ENCODE measurements at regions of chr17 and their contacts with region 1.

Region 1: GRCh38 chr17:81553018-81553615 is 964 bp upstream of the FAAP100 start:
- DNase-seq: peak; percentile 68
- H3K4me3 Mint-ChIP-seq: peak overlapping the region; percentile 87
- H3K27ac Mint-ChIP-seq: peak overlapping the region; percentile 88
- H3K4me1 Mint-ChIP-seq: peaks cover 19% of the 10 kb centered on the region
- H3K27me3 Mint-ChIP-seq: no peaks in the 10 kb centered on the region

Region 2: GRCh38 chr17:81253358-81254131 is 299.6 kb before region 1 on chr17:
- intact Hi-C with region 1: loop called (anchors 5 kb)
- DNase-seq: peak; percentile 41
- H3K4me3 Mint-ChIP-seq: no peak overlapping the region
- H3K27ac Mint-ChIP-seq: peak overlapping the region; percentile 2
- H3K4me1 Mint-ChIP-seq: peaks cover 2% of the 10 kb centered on the region
- H3K27me3 Mint-ChIP-seq: no peaks in the 10 kb centered on the region

Region 3: DNA sequence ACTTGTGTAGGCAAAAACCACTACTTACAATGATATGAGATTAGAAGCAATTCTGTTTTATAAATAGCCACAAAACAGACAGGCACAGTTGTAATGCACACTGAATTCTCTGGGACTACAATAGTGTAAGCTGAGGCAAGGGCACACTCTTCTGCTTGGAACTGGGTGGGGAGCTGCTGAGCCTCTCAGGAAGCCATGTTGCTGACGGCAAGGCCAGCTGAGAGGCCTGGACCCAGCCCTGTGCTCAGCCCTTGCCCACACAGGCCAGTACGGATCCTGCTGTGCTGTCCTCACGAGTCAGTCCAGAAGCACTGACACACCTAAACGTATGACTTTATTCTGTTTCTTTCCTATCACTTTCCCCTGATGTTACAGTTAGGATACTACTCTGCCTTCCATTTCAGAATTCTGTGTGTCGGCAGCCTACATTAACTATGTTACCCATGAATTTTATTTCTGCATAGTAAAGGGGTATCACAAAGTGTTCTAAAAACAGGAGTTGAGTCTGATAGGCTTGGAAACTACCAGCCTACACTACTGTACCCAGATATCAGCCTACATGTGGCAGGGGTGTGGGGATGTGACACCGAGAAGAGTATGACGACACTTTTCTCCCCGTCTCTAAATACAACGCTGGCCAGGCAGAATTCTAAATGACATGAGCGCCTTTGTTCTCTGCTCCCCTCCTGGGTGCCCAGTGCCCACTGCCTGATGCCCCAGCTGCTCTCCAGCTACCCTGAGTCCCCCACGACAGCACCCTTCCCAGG is 40.2 kb after region 1 on chr17:
- intact Hi-C with region 1: no loop called
- DNase-seq: no peak
- H3K4me3 Mint-ChIP-seq: no peak overlapping the region
- H3K27ac Mint-ChIP-seq: no peak overlapping the region
- H3K4me1 Mint-ChIP-seq: peaks cover 2% of the 10 kb centered on the region
- H3K27me3 Mint-ChIP-seq: no peaks in the 10 kb centered on the region

Region 4: DNA sequence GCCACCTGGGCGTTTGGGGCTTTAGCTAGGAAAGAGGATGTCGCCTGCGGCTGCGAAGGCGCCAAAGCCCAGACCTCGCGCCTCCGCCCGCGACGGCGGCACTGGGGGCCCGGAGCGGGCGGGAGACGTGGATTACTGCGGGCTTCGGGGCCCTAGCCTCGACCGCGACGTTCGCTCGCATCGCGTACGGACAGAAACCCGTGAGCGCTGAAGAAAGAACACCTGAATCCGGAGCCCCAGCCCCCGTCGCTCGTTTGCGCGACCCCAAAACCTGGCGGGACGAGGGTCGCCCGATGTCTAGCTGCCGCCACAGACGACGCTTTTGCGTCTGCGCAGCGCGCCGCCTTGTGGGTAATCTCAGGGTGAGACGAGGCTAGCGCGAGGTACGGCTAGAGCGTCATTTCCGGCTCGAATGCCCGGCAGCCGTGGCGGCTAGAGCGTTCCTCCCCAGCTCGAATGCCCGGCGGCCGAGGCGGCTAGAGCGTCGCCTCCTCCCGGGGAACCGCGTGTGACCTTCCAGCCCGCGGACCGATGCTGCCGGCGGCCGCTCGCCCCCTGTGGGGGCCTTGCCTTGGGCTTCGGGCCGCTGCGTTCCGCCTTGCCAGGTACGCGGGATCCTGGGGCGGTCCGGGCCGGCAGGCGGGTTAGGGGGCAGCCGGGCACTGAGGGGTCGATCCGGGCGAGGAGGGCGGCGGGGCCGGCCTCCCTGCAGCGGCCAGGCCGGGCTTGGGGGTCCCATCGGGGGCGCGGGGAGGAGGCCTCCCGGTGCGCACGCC is 150.0 kb after region 1 on chr17 and contains the start of gene MRPL12:
- intact Hi-C with region 1: no loop called
- DNase-seq: peak; percentile 85
- H3K4me3 Mint-ChIP-seq: peak within 1 kb of the TSS; percentile 98
- H3K27ac Mint-ChIP-seq: peak within 1 kb of the TSS; percentile 96
- H3K4me1 Mint-ChIP-seq: peaks cover 13% of the 10 kb centered on the region
- H3K27me3 Mint-ChIP-seq: no peaks in the 10 kb centered on the region
- total RNA-seq, gene MRPL12: 175 and 179 TPM in 2 replicates